ENCODE measurements at regions of chr14 and their contacts with region 1.

Region 1: GRCh38 chr14:90903101-90903500 is 86.9 kb upstream of the TTC7B start:
- DNase-seq: peak; percentile 63
- H3K4me3 Mint-ChIP-seq: no peak overlapping the region
- H3K27ac Mint-ChIP-seq: no peak overlapping the region
- H3K4me1 Mint-ChIP-seq: no peaks in the 10 kb centered on the region
- H3K27me3 Mint-ChIP-seq: no peaks in the 10 kb centered on the region
- CTCF ChIP-seq: peak; percentile 27

Region 2: DNA sequence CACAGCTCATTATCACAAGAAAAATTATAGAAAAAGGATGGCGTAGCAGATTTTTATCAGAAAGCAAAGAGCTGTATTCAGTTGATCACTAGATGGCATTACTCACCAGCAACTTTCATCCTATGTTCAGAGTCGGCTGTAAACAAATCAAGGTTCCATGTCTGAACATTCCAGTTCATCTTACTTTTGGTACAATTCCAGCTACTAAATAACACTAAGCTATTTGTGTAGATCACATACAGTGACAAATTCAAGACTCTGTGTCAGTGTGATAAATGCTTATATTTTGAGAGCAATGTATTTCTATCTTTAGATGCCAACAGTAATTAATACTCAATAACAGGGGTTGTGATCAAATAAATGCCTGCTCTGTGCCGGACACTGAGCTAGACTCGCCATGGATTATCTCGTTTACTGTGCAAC is 601.4 kb before region 1 on chr14:
- CTCF ChIA-PET with region 1: no interaction called
- intact Hi-C with region 1: loop called (anchors 5 kb)
- DNase-seq: no peak
- H3K4me3 Mint-ChIP-seq: no peak overlapping the region
- H3K27ac Mint-ChIP-seq: no peak overlapping the region
- H3K4me1 Mint-ChIP-seq: no peaks in the 10 kb centered on the region
- H3K27me3 Mint-ChIP-seq: no peaks in the 10 kb centered on the region
- CTCF ChIP-seq: no peak

Region 3: GRCh38 chr14:91059576-91060350 is 156.7 kb after region 1 on chr14:
- CTCF ChIA-PET with region 1: interaction called, 9 read pairs
- intact Hi-C with region 1: loop called (anchors 1 kb)
- DNase-seq: peak; percentile 72
- H3K4me3 Mint-ChIP-seq: no peak overlapping the region
- H3K27ac Mint-ChIP-seq: no peak overlapping the region
- H3K4me1 Mint-ChIP-seq: peaks cover 12% of the 10 kb centered on the region
- H3K27me3 Mint-ChIP-seq: no peaks in the 10 kb centered on the region
- CTCF ChIP-seq: no peak

Region 4: GRCh38 chr14:91114079-91115065 is 211.3 kb after region 1 on chr14:
- CTCF ChIA-PET with region 1: interaction called, 15 read pairs
- intact Hi-C with region 1: no loop called
- DNase-seq: peak; percentile 75
- H3K4me3 Mint-ChIP-seq: peak overlapping the region; percentile 90
- H3K27ac Mint-ChIP-seq: peak overlapping the region; percentile 94
- H3K4me1 Mint-ChIP-seq: peaks cover 45% of the 10 kb centered on the region
- H3K27me3 Mint-ChIP-seq: no peaks in the 10 kb centered on the region
- CTCF ChIP-seq: no peak

Region 5: DNA sequence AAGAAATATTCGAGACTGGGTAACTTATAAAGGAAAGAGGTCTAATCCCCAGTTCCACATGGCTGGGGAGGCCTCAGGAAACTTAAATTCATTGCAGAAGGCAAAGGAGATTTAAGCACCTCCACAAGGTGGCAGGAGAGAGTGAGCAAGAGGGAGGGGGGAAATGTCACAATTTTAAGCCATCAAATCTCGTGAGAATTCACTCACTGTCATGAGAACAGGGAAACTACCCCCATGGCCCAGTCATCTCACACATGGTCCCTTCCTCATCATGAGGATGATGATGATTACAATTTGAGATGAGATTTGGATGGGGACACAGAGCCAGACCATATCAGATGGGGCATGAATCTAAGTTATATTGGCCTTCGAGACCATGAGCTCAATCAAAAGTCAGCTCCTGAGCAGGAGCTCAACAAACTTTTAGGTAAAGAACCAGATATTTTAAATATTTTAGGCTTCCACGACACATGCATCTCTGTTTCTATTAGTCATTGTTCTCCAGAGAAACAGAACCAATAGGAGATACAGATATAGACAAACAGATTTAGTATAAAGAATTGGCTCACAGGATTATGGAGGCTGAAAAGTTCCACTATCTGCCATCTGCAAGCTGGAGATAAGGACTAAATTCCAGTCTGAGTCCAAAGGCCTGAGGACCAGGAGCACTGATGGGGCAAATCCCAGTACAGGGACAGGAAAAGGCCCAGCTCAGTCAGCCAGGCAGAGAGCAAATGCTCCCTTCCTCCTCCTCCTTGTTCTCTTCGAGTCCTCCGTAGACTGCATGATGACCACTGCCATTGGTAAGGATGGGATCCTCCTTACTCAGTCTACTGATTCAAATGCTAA is 235.6 kb after region 1 on chr14:
- CTCF ChIA-PET with region 1: interaction called, 3 read pairs
- intact Hi-C with region 1: loop called (anchors 1 kb)
- DNase-seq: peak; percentile 50
- H3K4me3 Mint-ChIP-seq: no peak overlapping the region
- H3K27ac Mint-ChIP-seq: no peak overlapping the region
- H3K4me1 Mint-ChIP-seq: no peaks in the 10 kb centered on the region
- H3K27me3 Mint-ChIP-seq: no peaks in the 10 kb centered on the region
- CTCF ChIP-seq: peak; percentile 40

Region 6: GRCh38 chr14:91177073-91178034 is 274.3 kb after region 1 on chr14:
- CTCF ChIA-PET with region 1: interaction called, 26 read pairs
- intact Hi-C with region 1: loop called (anchors 1 kb)
- DNase-seq: peak; percentile 54
- H3K4me3 Mint-ChIP-seq: no peak overlapping the region
- H3K27ac Mint-ChIP-seq: no peak overlapping the region
- H3K4me1 Mint-ChIP-seq: no peaks in the 10 kb centered on the region
- H3K27me3 Mint-ChIP-seq: no peaks in the 10 kb centered on the region
- CTCF ChIP-seq: no peak

Region 7: GRCh38 chr14:91286530-91286937 is 383.4 kb after region 1 on chr14:
- CTCF ChIA-PET with region 1: no interaction called
- intact Hi-C with region 1: loop called (anchors 1 kb)
- DNase-seq: peak; percentile 78
- H3K4me3 Mint-ChIP-seq: no peak overlapping the region
- H3K27ac Mint-ChIP-seq: no peak overlapping the region
- H3K4me1 Mint-ChIP-seq: no peaks in the 10 kb centered on the region
- H3K27me3 Mint-ChIP-seq: no peaks in the 10 kb centered on the region
- CTCF ChIP-seq: peak; percentile 73

Measured in Calu3 (cell line).